HEK293 (cell line): ENCODE measurements at regions of chr15 and their contacts with region 1.

Region 1: DNA sequence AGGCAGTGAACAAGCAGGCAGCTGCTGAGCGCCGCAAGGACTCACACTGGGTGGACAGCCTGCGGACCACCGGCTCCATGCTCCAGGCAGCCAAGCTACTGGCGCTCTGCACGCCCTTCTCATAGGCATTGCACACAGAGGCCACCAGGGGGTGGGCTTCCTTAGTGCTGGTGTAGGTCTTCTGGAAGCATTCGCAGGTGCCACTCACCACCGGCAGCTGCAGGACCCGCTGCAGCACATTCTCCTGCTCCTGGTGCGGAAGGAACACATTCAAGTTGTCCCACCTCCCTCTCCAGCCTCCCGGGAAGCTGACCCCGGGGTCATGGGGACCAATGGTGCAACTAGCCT is 6.0 kb downstream of the PLIN1 start:
- H3K4me3 ChIP-seq: no peak overlapping the region
- H3K27ac ChIP-seq: no peak overlapping the region
- H3K4me1 ChIP-seq: no peaks in the 10 kb centered on the region
- CTCF ChIP-seq: peak; percentile 46

Region 2: GRCh38 chr15:89531796-89532537 is 141.2 kb before region 1 on chr15:
- CTCF ChIA-PET with region 1: no interaction called
- POLR2A ChIA-PET with region 1: no interaction called
- H3K4me3 ChIP-seq: no peak overlapping the region
- H3K27ac ChIP-seq: no peak overlapping the region
- H3K4me1 ChIP-seq: no peaks in the 10 kb centered on the region
- CTCF ChIP-seq: no peak

Region 3: GRCh38 chr15:89647191-89647851 is 25.8 kb before region 1 on chr15:
- CTCF ChIA-PET with region 1: interaction called, 12 read pairs
- POLR2A ChIA-PET with region 1: no interaction called
- H3K4me3 ChIP-seq: no peak overlapping the region
- H3K27ac ChIP-seq: no peak overlapping the region
- H3K4me1 ChIP-seq: no peaks in the 10 kb centered on the region
- CTCF ChIP-seq: peak; percentile 95

Region 4: DNA sequence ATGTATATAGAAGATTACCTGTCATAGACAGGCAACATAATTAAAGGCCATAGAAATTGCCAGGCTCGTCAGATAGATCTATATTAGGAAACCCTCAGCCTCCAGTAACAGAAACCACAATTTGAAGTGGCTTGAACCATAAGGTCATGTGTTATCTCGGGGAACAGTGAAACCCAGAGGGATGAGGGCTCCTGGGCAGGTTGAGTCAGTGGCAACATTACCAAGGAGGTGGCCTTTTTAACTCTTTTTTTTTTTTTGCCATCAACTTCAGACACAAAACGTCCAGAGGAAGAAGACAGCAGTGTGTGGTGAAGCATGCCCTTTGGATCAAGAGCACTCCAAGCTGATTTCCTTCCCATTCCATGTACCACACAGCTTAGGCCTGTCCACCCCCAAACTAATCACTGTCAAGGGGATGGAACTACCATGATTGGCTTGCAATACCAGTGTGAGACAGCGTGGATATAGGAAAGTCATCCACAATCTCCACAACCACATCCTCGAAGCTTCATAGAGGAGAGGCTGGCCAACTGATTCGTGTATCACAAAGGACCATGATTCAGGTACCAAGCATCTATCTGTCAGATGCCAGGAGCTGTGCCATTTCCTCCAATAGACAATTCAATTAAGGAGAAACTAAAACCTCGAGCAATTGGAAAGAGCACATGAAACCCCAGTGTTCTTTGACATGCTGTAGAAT is 16.9 kb before region 1 on chr15:
- CTCF ChIA-PET with region 1: interaction called, 31 read pairs
- POLR2A ChIA-PET with region 1: interaction called, 3 read pairs
- H3K4me3 ChIP-seq: no peak overlapping the region
- H3K27ac ChIP-seq: no peak overlapping the region
- H3K4me1 ChIP-seq: peaks cover 8% of the 10 kb centered on the region; the same call in 1 of the 2 replicates
- CTCF ChIP-seq: no peak

Region 5: GRCh38 chr15:89690276-89691218 is 17.4 kb after region 1 on chr15 and contains the starts of genes PEX11A and WDR93:
- CTCF ChIA-PET with region 1: interaction called, 10 read pairs
- POLR2A ChIA-PET with region 1: interaction called, 4 read pairs
- H3K4me3 ChIP-seq: peak within 1 kb of the TSS; percentile 91
- H3K27ac ChIP-seq: peak within 1 kb of the TSS; percentile 58; the same call in 1 of the 2 replicates
- H3K4me1 ChIP-seq: no peaks in the 10 kb centered on the region
- CTCF ChIP-seq: no peak

Region 6: GRCh38 chr15:89936051-89936785 is 263.1 kb after region 1 on chr15:
- CTCF ChIA-PET with region 1: no interaction called
- POLR2A ChIA-PET with region 1: no interaction called
- H3K4me3 ChIP-seq: no peak overlapping the region
- H3K27ac ChIP-seq: no peak overlapping the region
- H3K4me1 ChIP-seq: no peaks in the 10 kb centered on the region
- CTCF ChIP-seq: no peak